ENCODE measurements at regions of chr12 and their contacts with region 1.

Region 1: DNA sequence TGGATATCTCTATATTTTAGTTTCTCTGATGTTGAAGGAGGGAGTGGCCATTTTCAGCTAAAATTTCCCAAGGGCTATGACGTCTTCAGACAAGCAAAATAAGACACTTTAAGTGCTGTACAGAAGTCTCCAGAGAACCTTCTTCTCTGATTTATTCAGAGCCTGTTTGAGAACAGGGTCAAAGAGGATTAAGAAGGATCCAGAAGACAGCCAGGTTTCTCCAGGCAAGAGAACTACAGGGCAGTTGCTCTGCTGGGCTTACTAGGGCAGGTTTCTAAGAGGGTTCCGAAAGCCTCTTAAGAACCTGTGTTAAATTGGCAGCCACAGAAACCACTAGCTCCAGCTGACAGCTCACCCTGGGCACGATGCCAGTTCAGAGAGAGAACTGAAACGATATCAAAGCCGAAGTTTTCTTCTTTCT is 1.2 kb downstream of the MGP start:
- DNase-seq: peak; percentile 84
- H3K4me3 Mint-ChIP-seq: peak overlapping the region; percentile 11
- H3K27ac Mint-ChIP-seq: no peak overlapping the region
- H3K4me1 Mint-ChIP-seq: peaks cover 29% of the 10 kb centered on the region
- H3K27me3 Mint-ChIP-seq: no peaks in the 10 kb centered on the region

Region 2: DNA sequence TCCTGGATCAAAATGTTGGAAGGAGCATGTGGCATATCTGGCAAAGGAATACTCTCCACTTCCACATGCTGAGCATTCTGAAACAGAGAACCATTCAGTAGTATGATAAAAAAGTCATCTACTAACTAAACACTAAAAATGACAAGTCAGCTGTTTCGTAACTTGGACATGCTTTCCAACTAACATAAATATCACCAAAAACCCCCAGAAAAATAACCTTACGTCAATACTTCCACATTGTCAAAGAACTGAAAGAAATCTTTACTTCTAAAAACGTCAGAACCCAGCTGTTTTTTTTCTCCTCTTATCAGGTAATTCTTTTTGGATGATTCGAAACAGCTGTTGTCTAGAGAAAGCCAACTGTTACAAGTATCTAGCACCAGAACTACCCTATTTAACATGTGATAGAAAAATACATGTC is 89.4 kb before region 1 on chr12:
- CTCF ChIA-PET with region 1: no interaction called
- intact Hi-C with region 1: no loop called
- DNase-seq: no peak
- H3K4me3 Mint-ChIP-seq: no peak overlapping the region
- H3K27ac Mint-ChIP-seq: no peak overlapping the region
- H3K4me1 Mint-ChIP-seq: peaks cover 6% of the 10 kb centered on the region
- H3K27me3 Mint-ChIP-seq: no peaks in the 10 kb centered on the region

Region 3: GRCh38 chr12:14902317-14902864 is 17.9 kb after region 1 on chr12:
- CTCF ChIA-PET with region 1: no interaction called
- intact Hi-C with region 1: loop called (anchors 2 kb)
- DNase-seq: no peak
- H3K4me3 Mint-ChIP-seq: no peak overlapping the region
- H3K27ac Mint-ChIP-seq: no peak overlapping the region
- H3K4me1 Mint-ChIP-seq: peaks cover 20% of the 10 kb centered on the region
- H3K27me3 Mint-ChIP-seq: no peaks in the 10 kb centered on the region

Region 4: DNA sequence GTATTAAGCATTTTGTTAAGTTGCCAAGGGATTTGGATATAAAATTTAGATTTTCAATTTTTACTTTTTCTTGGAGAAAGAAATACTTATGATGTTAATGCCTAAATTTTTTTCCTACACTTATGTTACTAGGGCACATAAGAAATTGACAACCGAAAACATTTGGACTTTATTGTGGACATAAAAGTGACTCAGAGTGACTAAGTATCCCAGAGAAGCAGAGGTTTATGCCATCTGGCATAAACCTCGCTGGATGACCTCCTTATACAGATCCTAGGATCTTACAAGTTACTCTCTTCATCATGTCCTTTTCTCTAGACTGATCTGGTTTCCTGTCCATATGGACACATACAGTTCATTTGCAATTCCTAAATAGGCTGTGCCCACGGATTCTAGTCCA is 247.0 kb after region 1 on chr12:
- CTCF ChIA-PET with region 1: no interaction called
- intact Hi-C with region 1: no loop called
- DNase-seq: no peak
- H3K4me3 Mint-ChIP-seq: no peak overlapping the region
- H3K27ac Mint-ChIP-seq: no peak overlapping the region
- H3K4me1 Mint-ChIP-seq: no peaks in the 10 kb centered on the region
- H3K27me3 Mint-ChIP-seq: peaks cover 7% of the 10 kb centered on the region